ENCODE measurements at regions of chr2 and their contacts with region 1.

Region 1: GRCh38 chr2:176140513-176141317 is 10.6 kb upstream of the HOXD4 start:
- DNase-seq: no peak
- H3K4me3 ChIP-seq: peak overlapping the region; percentile 37 to 67 (median 44)
- H3K27ac ChIP-seq: peak overlapping the region; percentile 18 to 66 (median 62)
- H3K4me1 ChIP-seq: peaks cover 0 to 32% (median 9%) of the 10 kb centered on the region in 3 donors
- H3K27me3 ChIP-seq: peaks cover 13 to 100% (median 29%) of the 10 kb centered on the region in 4 donors
- CTCF ChIP-seq: peak; percentile 76 to 95 (median 88)
- POLR2A ChIP-seq: no peak

Region 2: GRCh38 chr2:175990099-175990498 is 150.6 kb before region 1 on chr2:
- intact Hi-C with region 1: no loop called
- DNase-seq: no peak
- H3K4me3 ChIP-seq: no peak overlapping the region
- H3K27ac ChIP-seq: no peak overlapping the region
- H3K4me1 ChIP-seq: no peaks in the 10 kb centered on the region
- H3K27me3 ChIP-seq: no peaks in the 10 kb centered on the region
- CTCF ChIP-seq: no peak
- POLR2A ChIP-seq: no peak

Region 3: DNA sequence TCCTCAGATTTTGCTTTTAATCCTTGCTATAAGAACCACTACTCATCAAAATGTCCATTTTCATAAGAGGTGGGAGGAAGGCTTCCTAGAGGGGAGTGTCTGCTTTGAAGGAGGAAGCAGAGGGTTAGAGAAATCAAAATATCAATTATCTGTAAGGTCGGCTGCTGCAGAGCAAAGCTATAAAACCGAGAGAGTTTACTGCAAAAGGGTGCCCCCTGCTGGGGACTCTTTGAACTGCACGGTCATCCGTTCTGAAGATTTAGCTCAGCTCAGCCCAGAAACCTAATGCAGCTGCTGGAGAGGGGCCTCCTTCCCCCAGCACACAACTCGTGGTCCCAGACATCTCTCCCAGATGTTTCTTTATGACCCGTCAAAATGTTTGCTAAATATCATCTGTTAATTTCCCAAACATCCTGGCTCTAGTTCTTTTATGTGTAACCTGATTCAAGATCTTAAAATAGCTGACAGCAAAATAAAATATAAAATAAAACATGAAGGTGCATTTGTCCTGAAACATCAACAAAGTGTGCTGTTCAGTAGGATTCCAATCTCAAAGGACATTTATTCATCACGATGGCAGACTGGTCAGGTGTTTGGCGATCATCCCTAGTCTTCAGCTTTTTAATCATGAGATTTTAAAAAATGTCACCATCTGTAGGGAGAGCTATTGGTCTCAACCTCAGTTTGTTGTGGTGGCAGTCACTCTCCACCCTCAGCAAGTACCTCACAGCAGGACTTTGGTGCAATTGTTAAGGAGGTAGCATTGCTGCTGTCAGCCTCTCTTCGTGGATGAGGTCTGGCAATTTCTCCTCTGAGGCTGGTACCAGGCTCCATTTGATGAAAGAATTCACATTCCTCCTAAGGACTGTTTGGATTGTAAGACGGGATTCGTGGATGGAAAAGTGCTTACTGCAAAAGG is 314.4 kb after region 1 on chr2:
- intact Hi-C with region 1: loop called (anchors 10 kb)
- DNase-seq: peak; percentile 17
- H3K4me3 ChIP-seq: no peak overlapping the region
- H3K27ac ChIP-seq: peak overlapping the region in 2 of 4 donors; percentile 42 to 67
- H3K4me1 ChIP-seq: peaks cover 0 to 19% (median 3%) of the 10 kb centered on the region in 3 donors
- H3K27me3 ChIP-seq: peaks cover 0 to 19% (median 0%) of the 10 kb centered on the region in 4 donors
- CTCF ChIP-seq: peak; percentile 84 to 97 (median 90)
- POLR2A ChIP-seq: no peak

Region 4: DNA sequence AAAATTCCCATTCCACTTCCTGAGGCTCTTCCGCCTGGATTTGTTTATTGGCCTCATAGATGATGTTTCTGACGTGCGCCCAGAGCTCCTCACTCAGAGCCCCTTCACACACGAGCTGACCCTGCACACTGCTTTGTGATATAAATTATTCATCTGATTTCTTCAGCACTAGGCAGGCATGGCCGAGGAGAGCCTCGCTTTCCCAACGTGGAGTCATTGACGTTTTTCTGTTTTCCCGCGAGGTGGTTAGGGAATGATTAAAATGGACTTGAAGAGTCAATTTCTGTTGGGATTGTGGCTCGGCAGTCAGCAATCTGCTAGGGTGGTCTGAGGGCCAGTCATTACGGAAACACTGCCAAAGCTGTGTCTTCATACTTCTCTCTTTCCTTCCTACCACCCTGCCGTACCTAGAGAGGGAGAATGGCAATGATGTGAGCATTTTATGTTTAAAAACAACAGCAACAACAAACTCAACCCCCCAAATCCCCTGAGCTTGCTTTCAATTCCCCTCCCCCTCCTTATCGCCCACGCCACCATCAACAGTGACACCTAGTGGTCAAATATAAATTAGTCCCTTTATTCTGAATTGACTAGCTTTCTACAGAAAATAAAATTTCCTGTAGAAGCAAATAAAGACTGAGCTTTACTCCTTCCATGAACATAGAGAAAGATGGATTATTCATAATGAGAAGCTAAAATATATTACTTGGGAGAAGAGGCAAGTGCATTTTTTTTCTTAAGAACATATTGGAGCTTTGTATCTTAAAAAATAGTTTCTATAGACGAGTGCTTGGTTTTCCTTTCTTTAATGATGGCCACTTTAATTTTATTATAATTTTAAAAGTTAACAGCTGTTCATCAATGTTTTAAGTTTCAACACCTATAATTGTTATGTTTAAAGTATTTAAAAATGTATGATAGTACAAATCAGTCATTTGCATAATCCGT is 413.7 kb after region 1 on chr2:
- intact Hi-C with region 1: loop called (anchors 5 kb)
- DNase-seq: no peak
- H3K4me3 ChIP-seq: peak overlapping the region; percentile 18 to 64 (median 46)
- H3K27ac ChIP-seq: peak overlapping the region; percentile 26 to 82 (median 79)
- H3K4me1 ChIP-seq: peaks cover 7 to 28% (median 13%) of the 10 kb centered on the region in 3 donors
- H3K27me3 ChIP-seq: peaks cover 0 to 52% (median 0%) of the 10 kb centered on the region in 4 donors
- CTCF ChIP-seq: peak; percentile 57 to 87 (median 82)
- POLR2A ChIP-seq: no peak

Region 5: GRCh38 chr2:176638167-176639015 is 497.7 kb after region 1 on chr2:
- intact Hi-C with region 1: loop called (anchors 5 kb)
- DNase-seq: no peak
- H3K4me3 ChIP-seq: peak overlapping the region; percentile 45 to 71 (median 57)
- H3K27ac ChIP-seq: peak overlapping the region in 2 of 4 donors; percentile 70 to 81
- H3K4me1 ChIP-seq: peaks cover 3 to 9% (median 7%) of the 10 kb centered on the region in 3 donors
- H3K27me3 ChIP-seq: peaks cover 11 to 95% (median 15%) of the 10 kb centered on the region in 4 donors
- CTCF ChIP-seq: peak; percentile 34 to 84 (median 74)
- POLR2A ChIP-seq: no peak

Region 6: DNA sequence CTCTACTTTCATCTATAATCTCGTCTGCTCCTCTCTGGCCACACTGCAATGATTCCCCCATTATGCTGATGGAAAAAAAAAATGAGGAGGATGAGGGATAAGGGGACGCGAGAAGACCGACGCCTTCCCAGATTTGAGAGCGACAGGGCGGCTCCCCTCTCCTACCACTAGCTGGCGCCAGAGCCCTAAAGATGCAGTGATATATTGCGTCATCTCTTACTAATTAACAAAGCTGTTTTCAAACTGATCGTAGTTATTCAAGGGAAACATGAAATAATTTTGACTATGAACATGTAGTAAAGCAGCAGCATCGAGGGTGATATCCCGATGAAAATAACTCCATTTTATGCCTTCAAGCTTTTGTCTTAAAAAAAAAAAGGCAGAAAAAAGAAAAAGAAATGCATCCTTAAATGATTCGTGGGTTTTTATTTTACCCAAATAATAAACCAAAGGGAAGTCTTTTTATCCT is 1023.9 kb after region 1 on chr2:
- intact Hi-C with region 1: no loop called
- DNase-seq: peak; percentile 28
- H3K4me3 ChIP-seq: peak overlapping the region; percentile 5 to 60 (median 40)
- H3K27ac ChIP-seq: peak overlapping the region; percentile 76 to 91 (median 88)
- H3K4me1 ChIP-seq: peaks cover 0 to 64% (median 28%) of the 10 kb centered on the region in 3 donors
- H3K27me3 ChIP-seq: no peaks in the 10 kb centered on the region
- CTCF ChIP-seq: peak; percentile 97 to 100 (median 99)
- POLR2A ChIP-seq: no peak